G401 (cell line): ENCODE measurements at regions of chr17 and their contacts with region 1.

Region 1: GRCh38 chr17:73521376-73521775 is 122.9 kb downstream of the SDK2 start:
- DNase-seq: no peak

Region 2: GRCh38 chr17:73455050-73455687 is 66.2 kb before region 1 on chr17:
- in situ Hi-C with region 1: loop called (anchors 10 kb)
- DNase-seq: no peak